Activated CD8-positive, alpha-beta memory T cell treated with anti-CD3 and anti-CD28 coated beads, Interleukin-2, amount 10 ng/mL, durations not matched to agents 7 days and 5 days (primary cell): ENCODE measurements at regions of chr9 and their contacts with region 1.

Region 1: DNA sequence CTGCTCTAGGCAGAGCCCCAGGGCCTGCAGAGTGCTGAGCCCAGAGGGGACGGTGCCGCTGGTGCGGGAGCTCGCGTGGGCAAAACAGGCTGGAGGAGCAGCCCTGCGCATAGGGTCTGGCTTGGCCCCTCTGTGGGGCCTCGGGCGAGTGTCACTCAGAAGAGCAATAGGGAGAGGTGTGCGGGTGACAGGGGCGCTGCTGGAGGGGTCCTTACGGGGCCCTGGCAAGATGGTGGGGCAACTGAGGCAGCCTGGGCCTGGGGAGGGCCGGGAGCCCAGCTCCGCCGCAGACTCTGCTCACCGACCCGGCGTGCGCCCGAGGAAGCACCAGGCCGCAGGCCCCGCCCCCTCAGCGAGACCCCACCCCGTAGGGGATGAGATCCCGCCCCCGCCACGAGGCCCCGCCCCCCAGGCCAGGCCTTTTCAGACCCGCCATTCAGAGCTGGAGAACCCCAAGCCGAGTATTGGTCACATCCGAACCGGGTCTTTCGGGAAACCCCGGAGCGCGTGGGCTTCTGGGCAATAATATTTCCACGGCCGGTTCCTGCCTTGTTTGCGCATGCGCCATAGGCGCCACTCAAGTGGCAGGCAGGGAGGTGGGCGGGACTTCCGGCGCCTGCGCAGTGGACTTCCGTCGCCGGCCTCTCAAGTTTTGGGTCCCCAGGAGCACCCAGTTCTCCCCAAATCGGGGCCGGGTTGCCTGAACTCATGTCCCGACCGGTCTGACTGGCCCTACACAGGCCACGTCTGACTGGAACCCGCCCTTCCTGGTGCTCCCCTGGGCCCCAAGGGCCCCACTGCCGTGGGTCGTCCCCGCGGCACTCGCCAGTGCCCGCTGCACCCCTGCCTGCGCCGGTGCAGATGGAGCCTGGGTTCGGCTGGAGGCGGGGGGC is 1.3 kb upstream of the RNF208 start:
- DNase-seq: peak; percentile 99
- ATAC-seq: peak; percentile 91
- H3K4me3 Mint-ChIP-seq: peak overlapping the region; percentile 72
- H3K27ac Mint-ChIP-seq: peak overlapping the region; percentile 72
- H3K4me1 Mint-ChIP-seq: peaks cover 18% of the 10 kb centered on the region
- H3K27me3 Mint-ChIP-seq: no peaks in the 10 kb centered on the region

Region 2: DNA sequence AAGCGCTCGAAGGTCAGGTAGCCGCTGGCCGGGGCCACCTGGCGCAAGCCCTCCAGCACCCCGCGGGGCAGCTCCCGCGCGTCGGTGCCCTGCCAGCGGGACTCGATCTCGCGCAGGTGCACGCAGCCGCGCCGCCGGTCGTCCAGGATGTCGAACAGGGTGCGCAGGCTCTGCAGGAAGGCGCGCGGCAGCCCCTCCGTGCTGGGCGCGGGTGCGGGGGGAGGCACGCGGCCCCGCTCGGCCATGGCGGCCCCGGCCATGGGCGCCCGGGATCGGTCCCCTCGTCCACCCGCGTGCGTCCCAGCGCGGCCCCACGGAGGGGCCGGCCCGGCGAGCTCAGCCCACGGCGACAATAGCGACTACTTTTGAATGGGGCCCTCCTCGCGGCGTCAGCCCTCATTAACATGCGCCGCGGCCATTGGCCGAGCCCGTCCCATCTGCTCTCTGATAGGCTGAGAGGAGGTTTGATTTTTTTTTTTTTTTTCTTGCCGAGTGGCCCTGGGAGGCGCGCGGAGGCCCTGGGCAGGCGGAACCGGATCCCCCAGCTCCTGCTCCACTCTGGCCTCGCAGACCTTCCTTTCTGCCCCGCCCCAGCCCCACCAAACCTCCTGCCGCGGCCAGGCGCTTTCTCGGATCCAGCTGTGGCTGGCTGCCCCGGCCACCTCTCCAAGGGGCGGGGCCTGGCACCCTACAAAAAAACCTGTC is 153.0 kb before region 1 on chr9 and contains the start of gene SAPCD2:
- CTCF ChIA-PET with region 1: interaction called, 10 read pairs
- DNase-seq: peak; percentile 93
- ATAC-seq: peak; percentile 91
- H3K4me3 Mint-ChIP-seq: peak within 1 kb of the TSS; percentile 78
- H3K27ac Mint-ChIP-seq: peak within 1 kb of the TSS; percentile 83
- H3K4me1 Mint-ChIP-seq: peaks cover 27% of the 10 kb centered on the region
- H3K27me3 Mint-ChIP-seq: no peaks in the 10 kb centered on the region
- total RNA-seq, gene SAPCD2: 31.9 to 40.1 TPM

Region 3: GRCh38 chr9:137114610-137115391 is 108.5 kb before region 1 on chr9 and contains the start of gene DPP7:
- CTCF ChIA-PET with region 1: interaction called, 34 read pairs
- DNase-seq: peak; percentile 85
- ATAC-seq: peak; percentile 96
- H3K4me3 Mint-ChIP-seq: peak within 1 kb of the TSS; percentile 66
- H3K27ac Mint-ChIP-seq: peak within 1 kb of the TSS; percentile 52
- H3K4me1 Mint-ChIP-seq: peaks cover 10% of the 10 kb centered on the region
- H3K27me3 Mint-ChIP-seq: no peaks in the 10 kb centered on the region
- total RNA-seq, gene DPP7: 271 to 321 TPM

Region 4: DNA sequence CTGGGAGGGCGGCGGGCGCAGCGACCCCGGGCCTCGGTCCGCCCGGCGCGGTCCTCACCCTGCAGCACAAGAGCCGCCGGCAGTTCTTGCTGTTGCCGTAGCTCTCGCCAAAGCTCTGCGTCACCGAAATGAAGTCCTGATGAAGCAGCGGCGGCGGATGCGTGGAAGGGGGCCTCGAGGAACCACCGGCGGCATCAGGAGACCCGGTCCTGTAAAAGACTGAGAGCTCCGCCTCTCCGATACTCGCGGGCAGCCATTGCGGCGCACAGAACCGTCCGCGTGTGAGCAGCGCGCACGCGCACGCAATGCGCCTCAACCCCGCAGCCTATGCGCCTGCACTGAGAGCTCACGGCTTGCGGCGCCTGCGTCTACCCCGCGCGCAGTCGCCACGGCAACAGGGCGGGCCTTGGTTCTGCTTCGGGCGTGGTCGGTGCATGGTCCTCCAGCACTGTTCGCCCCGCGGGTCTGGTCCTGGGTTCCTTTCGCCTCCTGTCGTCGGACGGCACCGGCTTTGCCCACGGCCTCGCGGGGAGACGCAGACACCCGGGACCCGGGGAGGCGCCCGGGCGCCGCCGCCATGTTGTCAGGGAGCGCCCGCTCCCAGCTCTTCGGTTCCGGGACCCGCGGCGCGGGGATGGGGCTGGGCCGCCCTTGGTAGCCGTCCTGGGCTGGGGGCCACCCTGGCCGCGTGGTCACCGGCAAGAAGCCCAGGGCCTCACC is 93.7 kb before region 1 on chr9:
- CTCF ChIA-PET with region 1: interaction called, 30 read pairs
- DNase-seq: peak; percentile 94
- ATAC-seq: peak; percentile 94
- H3K4me3 Mint-ChIP-seq: peak overlapping the region; percentile 83
- H3K27ac Mint-ChIP-seq: peak overlapping the region; percentile 81
- H3K4me1 Mint-ChIP-seq: peaks cover 28% of the 10 kb centered on the region
- H3K27me3 Mint-ChIP-seq: peaks cover 7% of the 10 kb centered on the region

Region 5: GRCh38 chr9:137200311-137201204 is 22.8 kb before region 1 on chr9 and contains the start of gene TPRN:
- CTCF ChIA-PET with region 1: interaction called, 17 read pairs
- DNase-seq: peak; percentile 100
- ATAC-seq: peak; percentile 95
- H3K4me3 Mint-ChIP-seq: peak within 1 kb of the TSS; percentile 85
- H3K27ac Mint-ChIP-seq: peak within 1 kb of the TSS; percentile 83
- H3K4me1 Mint-ChIP-seq: peaks cover 31% of the 10 kb centered on the region
- H3K27me3 Mint-ChIP-seq: no peaks in the 10 kb centered on the region
- total RNA-seq, gene TPRN: 11.1 to 13.3 TPM